ENCODE measurements at regions of chr17 and their contacts with region 1.

Region 1: GRCh38 chr17:41738077-41738735 is 3.8 kb upstream of the HAP1 start:
- DNase-seq: peak; percentile 90
- ATAC-seq: peak; percentile 95
- H3K4me3 Mint-ChIP-seq: no peak overlapping the region
- H3K27ac Mint-ChIP-seq: peak overlapping the region; percentile 38
- H3K4me1 Mint-ChIP-seq: peaks cover 10% of the 10 kb centered on the region
- H3K27me3 Mint-ChIP-seq: peaks cover 32% of the 10 kb centered on the region
- CTCF ChIP-seq: peak; percentile 94

Region 2: DNA sequence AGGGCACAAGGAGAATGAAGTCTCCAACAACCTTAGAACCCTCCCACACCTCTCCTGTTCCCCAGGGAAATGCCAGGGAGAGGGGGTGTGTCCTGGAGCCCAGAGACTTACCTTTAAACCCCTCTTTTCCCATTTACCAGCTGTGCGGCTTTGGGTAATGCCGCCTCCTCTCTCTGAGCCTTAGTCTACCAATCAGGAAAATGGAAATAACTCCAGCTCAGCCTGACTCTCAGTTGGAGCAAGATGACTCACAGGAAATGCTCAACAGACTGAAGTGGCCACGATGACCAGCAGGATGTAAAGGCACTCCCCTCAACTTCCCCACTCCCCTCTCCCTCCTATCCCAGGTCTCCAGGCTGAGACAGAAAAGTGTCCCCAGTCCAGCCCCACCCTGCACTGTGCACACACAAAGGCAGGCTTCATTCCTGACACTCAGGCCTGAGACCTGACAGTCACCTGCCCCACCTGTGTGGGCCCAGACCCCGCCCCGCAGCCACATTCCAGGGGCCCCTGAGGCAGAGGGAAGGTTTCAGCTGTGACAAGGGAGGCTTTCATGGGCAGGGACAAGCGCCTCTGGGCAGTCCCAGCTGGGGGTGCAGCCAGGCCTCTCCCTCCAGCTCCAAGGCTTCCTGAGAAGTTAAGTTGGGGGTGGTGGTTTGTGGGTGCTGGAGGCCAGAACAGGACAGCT is 216.5 kb before region 1 on chr17:
- CTCF ChIA-PET with region 1: no interaction called
- POLR2A ChIA-PET with region 1: no interaction called
- intact Hi-C with region 1: no loop called
- DNase-seq: no peak
- ATAC-seq: no peak
- H3K4me3 Mint-ChIP-seq: no peak overlapping the region
- H3K27ac Mint-ChIP-seq: no peak overlapping the region
- H3K4me1 Mint-ChIP-seq: no peaks in the 10 kb centered on the region
- H3K27me3 Mint-ChIP-seq: peaks cover 5% of the 10 kb centered on the region
- CTCF ChIP-seq: no peak

Region 3: DNA sequence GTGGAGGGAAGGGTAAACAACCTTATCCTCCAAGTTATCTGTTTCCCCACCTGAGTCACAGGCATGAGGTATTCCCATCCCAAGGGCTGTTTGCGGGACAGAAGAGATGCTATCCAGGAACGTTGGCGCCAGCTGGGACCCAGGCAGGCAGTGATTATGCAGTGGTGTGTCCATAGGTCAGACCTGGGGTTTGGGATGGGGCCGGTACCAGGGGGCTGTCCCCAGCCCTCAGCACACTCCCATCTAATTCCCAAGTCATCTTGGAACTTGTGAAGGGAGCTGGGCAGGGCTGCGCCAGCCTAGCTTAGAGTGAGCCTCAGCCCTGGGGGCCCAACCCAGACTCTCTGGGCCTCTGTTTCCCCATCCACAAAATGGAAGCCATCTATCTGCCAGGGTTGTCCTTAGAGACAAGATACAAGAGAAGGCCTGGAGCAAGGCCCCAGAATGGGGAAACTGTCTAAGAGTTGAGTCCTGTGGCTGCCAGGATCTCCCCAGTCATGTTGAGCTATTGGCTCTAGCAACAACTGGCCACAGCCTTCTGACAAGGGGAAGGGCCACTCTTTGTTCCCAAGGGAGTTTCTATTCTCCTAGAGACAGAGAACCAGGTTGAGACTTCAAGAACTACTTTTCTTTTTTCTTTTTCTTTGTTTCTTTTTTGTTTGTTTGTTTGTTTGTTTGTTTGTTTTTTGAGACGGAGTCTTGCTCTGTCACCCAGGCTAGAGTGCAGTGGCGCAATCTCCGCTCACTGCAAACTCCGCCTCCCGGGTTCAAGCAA is 58.1 kb after region 1 on chr17:
- CTCF ChIA-PET with region 1: interaction called, 48 read pairs
- POLR2A ChIA-PET with region 1: no interaction called
- intact Hi-C with region 1: loop called (anchors 2 kb)
- DNase-seq: no peak
- ATAC-seq: no peak
- H3K4me3 Mint-ChIP-seq: no peak overlapping the region
- H3K27ac Mint-ChIP-seq: no peak overlapping the region
- H3K4me1 Mint-ChIP-seq: no peaks in the 10 kb centered on the region
- H3K27me3 Mint-ChIP-seq: peaks cover 3% of the 10 kb centered on the region
- CTCF ChIP-seq: no peak

Region 4: GRCh38 chr17:41811549-41812380 is 73.6 kb after region 1 on chr17 and contains the start of gene P3H4:
- CTCF ChIA-PET with region 1: interaction called, 23 read pairs
- POLR2A ChIA-PET with region 1: interaction called, 4 read pairs
- intact Hi-C with region 1: no loop called
- DNase-seq: peak; percentile 78
- ATAC-seq: peak; percentile 86
- H3K4me3 Mint-ChIP-seq: peak within 1 kb of the TSS; percentile 79
- H3K27ac Mint-ChIP-seq: peak within 1 kb of the TSS; percentile 63
- H3K4me1 Mint-ChIP-seq: peaks cover 21% of the 10 kb centered on the region
- H3K27me3 Mint-ChIP-seq: peaks cover 7% of the 10 kb centered on the region
- CTCF ChIP-seq: peak; percentile 67
- total RNA-seq, gene P3H4: 2.6 to 3.2 TPM

Region 5: GRCh38 chr17:41835800-41836549 is 97.8 kb after region 1 on chr17 and contains the start of gene NT5C3B:
- CTCF ChIA-PET with region 1: interaction called, 10 read pairs
- POLR2A ChIA-PET with region 1: no interaction called
- intact Hi-C with region 1: no loop called
- DNase-seq: peak; percentile 48
- ATAC-seq: peak; percentile 82
- H3K4me3 Mint-ChIP-seq: peak within 1 kb of the TSS; percentile 83
- H3K27ac Mint-ChIP-seq: peak within 1 kb of the TSS; percentile 78
- H3K4me1 Mint-ChIP-seq: peaks cover 13% of the 10 kb centered on the region
- H3K27me3 Mint-ChIP-seq: peaks cover 3% of the 10 kb centered on the region
- CTCF ChIP-seq: no peak
- total RNA-seq, gene NT5C3B: 30.5 to 32.3 TPM